ENCODE measurements at regions of chr11 and their contacts with region 1.

Region 1: GRCh38 chr11:119334174-119334930 is at the start of gene RNF26:
- DNase-seq: peak; percentile 86
- H3K4me3 ChIP-seq: peak within 1 kb of the TSS; percentile 78
- H3K27me3 ChIP-seq: no peaks in the 10 kb centered on the region
- CTCF ChIP-seq: no peak
- polyA plus RNA-seq, gene RNF26: 38.4 and 65.1 TPM in 2 replicates

Region 2: GRCh38 chr11:119205574-119206510 is 128.5 kb before region 1 on chr11 and contains the start of gene CBL:
- CTCF ChIA-PET with region 1: interaction called, 5 read pairs
- POLR2A ChIA-PET with region 1: interaction called, 11 read pairs
- DNase-seq: peak; percentile 31
- H3K4me3 ChIP-seq: peak within 1 kb of the TSS; percentile 98
- H3K27me3 ChIP-seq: no peaks in the 10 kb centered on the region
- CTCF ChIP-seq: peak; percentile 98
- polyA plus RNA-seq, gene CBL: 9.3 and 11.4 TPM in 2 replicates

Region 3: DNA sequence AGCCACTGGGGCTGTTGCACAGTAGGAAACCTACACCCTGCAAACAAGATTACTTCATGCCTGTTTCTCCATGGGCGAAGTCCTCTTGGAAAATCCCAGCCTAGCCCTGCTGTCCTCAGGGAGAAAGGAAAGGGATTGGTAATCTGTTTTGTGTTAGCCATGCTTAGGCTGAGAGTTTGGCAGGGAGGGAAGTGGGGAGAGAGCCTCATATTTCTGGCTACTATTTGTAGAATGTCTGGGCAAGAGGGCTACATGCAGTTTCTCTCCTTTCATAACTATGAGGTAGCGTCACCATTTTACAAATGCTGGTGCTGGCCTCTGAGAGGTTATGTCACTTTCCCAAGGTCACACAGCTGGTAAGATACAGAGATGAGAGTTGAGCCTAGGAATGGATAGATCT is 12.9 kb after region 1 on chr11:
- CTCF ChIA-PET with region 1: interaction called, 36 read pairs
- POLR2A ChIA-PET with region 1: no interaction called
- DNase-seq: peak; percentile 61
- H3K4me3 ChIP-seq: no peak overlapping the region
- H3K27me3 ChIP-seq: peaks cover 20% of the 10 kb centered on the region
- CTCF ChIP-seq: no peak

Region 4: DNA sequence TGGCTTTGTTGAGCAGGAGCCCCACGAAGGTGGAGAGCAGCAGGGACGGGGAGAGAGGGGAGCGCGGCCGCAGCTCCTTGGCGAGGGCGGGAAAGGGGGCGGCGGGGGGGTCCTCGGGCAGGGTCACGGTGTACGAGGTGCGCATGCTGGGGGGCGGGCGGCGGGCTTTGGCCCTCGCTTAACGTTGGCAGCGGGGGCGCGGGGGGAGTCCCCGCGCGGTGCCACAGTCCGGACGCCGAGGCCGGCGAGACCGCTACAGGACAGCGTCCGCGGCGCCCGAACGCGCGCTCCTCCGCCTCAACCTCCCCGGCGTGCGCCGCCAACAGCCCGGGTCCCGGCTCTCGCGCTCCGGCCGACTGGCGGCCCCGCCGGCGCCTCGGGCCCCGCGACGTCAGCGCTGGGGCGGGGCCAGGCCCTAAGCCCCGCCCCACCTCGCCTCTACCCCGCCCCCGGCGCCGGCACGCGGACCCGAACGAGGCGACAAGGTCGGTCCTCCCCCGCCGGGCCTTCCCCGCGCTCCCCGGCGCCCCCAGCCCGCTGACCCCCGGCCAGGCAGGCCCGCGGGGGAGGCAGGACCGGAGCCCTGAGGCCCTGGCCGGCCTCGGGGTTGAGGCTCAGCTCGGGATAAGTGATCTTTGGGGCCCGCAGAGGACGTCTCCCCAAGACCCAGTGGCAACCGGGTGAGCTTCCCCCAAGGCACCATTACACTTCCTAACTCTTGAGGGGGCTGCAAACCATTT is 29.7 kb after region 1 on chr11:
- CTCF ChIA-PET with region 1: interaction called, 18 read pairs
- POLR2A ChIA-PET with region 1: interaction called, 5 read pairs
- DNase-seq: no peak
- H3K4me3 ChIP-seq: peak overlapping the region; percentile 32
- H3K27me3 ChIP-seq: no peaks in the 10 kb centered on the region
- CTCF ChIP-seq: no peak

Region 5: GRCh38 chr11:119381181-119381988 is 47.0 kb after region 1 on chr11 and contains the start of gene USP2:
- CTCF ChIA-PET with region 1: interaction called, 110 read pairs
- POLR2A ChIA-PET with region 1: no interaction called
- DNase-seq: peak; percentile 90
- H3K4me3 ChIP-seq: peak within 1 kb of the TSS; percentile 47
- H3K27me3 ChIP-seq: peaks cover 5% of the 10 kb centered on the region; the same call in 1 of the 2 replicates
- CTCF ChIP-seq: peak; percentile 89
- polyA plus RNA-seq, gene USP2: 0.27 and 0.71 TPM in 2 replicates

Measured in BJ (cell line).